ENCODE measurements at regions of chr1 and their contacts with region 1.

Region 1: GRCh38 chr1:10045480-10046355 is 13.0 kb downstream of the UBE4B start:
- DNase-seq: no peak
- ATAC-seq: peak; percentile 19; the same call in 1 of the 2 replicates
- H3K4me3 Mint-ChIP-seq: no peak overlapping the region
- H3K27ac Mint-ChIP-seq: peak overlapping the region; percentile 53
- H3K4me1 Mint-ChIP-seq: peaks cover 24% of the 10 kb centered on the region
- H3K27me3 Mint-ChIP-seq: no peaks in the 10 kb centered on the region
- CTCF ChIP-seq: no peak

Region 2: DNA sequence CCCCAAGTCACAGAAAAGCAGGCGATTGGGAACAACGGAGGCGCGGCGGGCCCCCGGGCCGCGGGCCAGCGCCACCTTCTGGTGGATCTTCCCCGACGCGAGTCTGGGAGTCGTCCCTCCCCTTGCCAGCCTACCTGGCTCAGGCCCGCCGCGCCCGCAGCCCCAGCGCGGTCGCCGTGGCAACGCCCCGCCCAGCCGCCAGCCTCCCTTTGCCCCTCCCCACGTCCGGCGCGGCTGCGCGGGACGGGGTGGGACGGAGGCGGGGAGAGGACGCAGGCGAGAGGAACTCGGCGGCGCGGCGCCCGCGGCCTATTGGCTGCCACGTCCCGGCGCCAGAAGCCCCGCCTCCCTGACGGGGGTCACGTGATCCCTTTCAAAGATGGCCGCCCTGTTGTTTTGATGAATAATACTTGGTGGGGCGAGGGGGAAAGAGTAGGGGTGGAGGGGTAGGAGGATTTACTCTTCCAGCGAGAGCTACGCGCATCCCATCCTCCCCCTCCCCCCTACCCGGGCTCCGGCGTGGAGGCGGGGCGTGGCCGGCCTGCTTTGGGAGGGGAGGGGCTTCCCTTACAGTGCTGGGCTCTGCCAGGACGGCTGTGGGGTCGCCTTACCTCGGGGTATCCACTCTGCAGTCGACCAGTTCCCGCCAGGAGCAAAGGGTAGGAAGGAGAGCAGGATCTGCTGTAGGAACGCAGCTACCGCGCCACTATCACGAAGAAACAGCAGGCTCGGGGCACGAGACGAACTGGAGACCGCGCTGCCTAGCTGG is 12.9 kb before region 1 on chr1 and contains the start of gene UBE4B:
- CTCF ChIA-PET with region 1: interaction called, 12 read pairs
- POLR2A ChIA-PET with region 1: interaction called, 8 read pairs
- DNase-seq: peak; percentile 99
- ATAC-seq: peak; percentile 92
- H3K4me3 Mint-ChIP-seq: peak within 1 kb of the TSS; percentile 83
- H3K27ac Mint-ChIP-seq: peak within 1 kb of the TSS; percentile 96
- H3K4me1 Mint-ChIP-seq: peaks cover 19% of the 10 kb centered on the region
- H3K27me3 Mint-ChIP-seq: no peaks in the 10 kb centered on the region
- CTCF ChIP-seq: peak; percentile 82
- total RNA-seq, gene UBE4B: 78.0 to 80.8 TPM (median 79.6 TPM) in 3 replicates

Measured in WTC11 (cell line).